ENCODE measurements at regions of chr3 and their contacts with region 1.

Region 1: DNA sequence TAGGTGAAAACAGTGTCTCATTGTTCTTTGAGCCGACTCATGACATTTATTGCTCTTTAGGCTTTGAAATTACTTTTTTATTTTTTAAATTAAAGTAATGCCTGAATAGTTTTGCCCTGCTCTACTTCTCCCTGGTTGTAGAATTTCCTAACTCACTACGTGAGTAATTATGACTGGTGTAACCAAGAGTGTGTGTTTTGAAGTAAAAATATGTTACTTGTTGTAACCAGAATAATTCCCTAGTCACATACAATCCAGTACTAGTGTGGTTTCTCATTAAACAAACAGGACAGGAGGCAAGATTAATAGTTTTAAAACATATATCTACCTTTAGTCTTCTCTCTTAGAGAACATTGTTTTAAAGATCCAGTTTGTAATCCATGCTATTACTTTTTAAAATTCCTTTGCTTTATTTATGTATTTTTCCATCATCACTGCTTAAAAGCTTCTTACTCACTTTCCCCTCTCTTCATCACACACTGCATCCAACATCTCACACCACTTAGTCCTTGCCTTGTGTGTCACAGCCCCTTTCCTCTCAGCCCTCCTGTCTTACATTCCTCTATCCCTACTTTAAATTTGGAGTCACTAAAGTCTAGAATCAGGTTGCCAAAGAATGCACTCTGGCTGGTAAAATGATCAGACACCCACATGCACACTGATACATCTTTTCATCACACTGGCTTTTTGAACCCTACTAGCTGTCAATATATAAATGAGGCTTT is 219.7 kb downstream of the WNT5A start:
- DNase-seq: peak; percentile 76
- ATAC-seq: peak; percentile 60
- H3K4me3 ChIP-seq: no peak overlapping the region
- H3K27ac ChIP-seq: peak overlapping the region; percentile 100
- H3K4me1 ChIP-seq: peaks cover 24% of the 10 kb centered on the region
- H3K27me3 ChIP-seq: no peaks in the 10 kb centered on the region
- CTCF ChIP-seq: no peak
- POLR2A ChIP-seq: no peak
- RAD21 ChIP-seq: no peak

Region 2: DNA sequence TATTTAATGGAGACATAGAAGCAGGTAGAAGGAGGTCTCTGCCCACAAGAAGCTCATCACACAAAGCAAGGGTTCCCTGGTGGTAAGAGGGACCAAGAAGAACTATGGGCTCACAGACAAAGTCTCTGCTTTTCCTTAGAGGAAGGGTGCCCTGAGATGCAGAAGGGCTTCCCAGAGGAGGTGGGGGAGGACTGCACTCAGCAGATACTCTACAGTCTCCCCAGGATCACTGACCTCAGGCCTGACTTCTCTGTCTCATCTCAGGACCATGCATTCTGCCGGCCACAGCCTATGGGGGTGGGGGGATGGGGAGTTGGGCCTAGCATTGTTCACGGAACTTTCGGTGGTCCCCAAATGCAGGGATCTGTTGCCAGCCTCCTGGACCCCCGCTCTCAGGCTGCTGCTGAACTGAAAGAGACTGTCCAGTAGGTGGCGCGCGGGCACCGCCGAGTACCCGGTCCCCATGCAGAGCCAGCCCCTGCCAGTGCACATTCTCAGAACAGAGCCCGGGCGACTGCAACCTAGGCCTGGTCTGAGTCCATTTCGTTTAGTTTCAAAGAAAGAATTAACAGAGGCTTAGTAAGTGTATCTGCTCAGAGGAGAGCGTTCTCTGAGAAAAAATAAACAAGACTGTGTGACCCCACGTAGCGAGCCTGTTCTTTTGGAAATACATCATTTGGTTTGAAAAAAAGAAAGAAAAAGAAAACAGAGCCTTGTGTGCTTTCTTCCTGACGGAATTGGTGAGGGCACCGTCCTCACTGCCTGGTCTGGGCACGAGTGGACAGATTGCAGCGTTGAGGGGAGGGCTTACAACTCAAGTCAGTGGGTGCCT is 413.6 kb before region 1 on chr3:
- CTCF ChIA-PET with region 1: no interaction called
- POLR2A ChIA-PET with region 1: no interaction called
- dilution Hi-C with region 1: no loop called
- in situ Hi-C with region 1: loop called (anchors 25 kb)
- intact Hi-C with region 1: no loop called
- DNase-seq: peak; percentile 74
- ATAC-seq: peak; percentile 98
- H3K4me3 ChIP-seq: no peak overlapping the region
- H3K27ac ChIP-seq: peak overlapping the region; percentile 79
- H3K4me1 ChIP-seq: peaks cover 8% of the 10 kb centered on the region
- H3K27me3 ChIP-seq: peaks cover 5% of the 10 kb centered on the region; the same call in 1 of the 2 replicates
- CTCF ChIP-seq: peak; percentile 83
- POLR2A ChIP-seq: no peak
- RAD21 ChIP-seq: peak; percentile 93

Region 3: GRCh38 chr3:54939557-54940300 is 327.6 kb before region 1 on chr3:
- CTCF ChIA-PET with region 1: no interaction called
- POLR2A ChIA-PET with region 1: no interaction called
- dilution Hi-C with region 1: no loop called
- in situ Hi-C with region 1: no loop called
- intact Hi-C with region 1: no loop called
- DNase-seq: peak; percentile 60
- ATAC-seq: peak; percentile 62
- H3K4me3 ChIP-seq: no peak overlapping the region
- H3K27ac ChIP-seq: no peak overlapping the region
- H3K4me1 ChIP-seq: no peaks in the 10 kb centered on the region
- H3K27me3 ChIP-seq: no peaks in the 10 kb centered on the region; the same call in 1 of the 2 replicates
- CTCF ChIP-seq: no peak
- POLR2A ChIP-seq: no peak
- RAD21 ChIP-seq: no peak

Region 4: GRCh38 chr3:55191911-55192787 is 75.2 kb before region 1 on chr3:
- CTCF ChIA-PET with region 1: no interaction called
- POLR2A ChIA-PET with region 1: no interaction called
- dilution Hi-C with region 1: no loop called
- in situ Hi-C with region 1: no loop called
- intact Hi-C with region 1: loop called (anchors 2 kb)
- DNase-seq: peak; percentile 98
- ATAC-seq: peak; percentile 82
- H3K4me3 ChIP-seq: no peak overlapping the region
- H3K27ac ChIP-seq: peak overlapping the region; percentile 94
- H3K4me1 ChIP-seq: peaks cover 15% of the 10 kb centered on the region
- H3K27me3 ChIP-seq: no peaks in the 10 kb centered on the region
- CTCF ChIP-seq: no peak
- POLR2A ChIP-seq: peak; percentile 52; the same call in 1 of the 2 replicates
- RAD21 ChIP-seq: peak; percentile 45

Region 5: GRCh38 chr3:55885721-55886120 is 618.4 kb after region 1 on chr3:
- CTCF ChIA-PET with region 1: no interaction called
- POLR2A ChIA-PET with region 1: no interaction called
- dilution Hi-C with region 1: no loop called
- in situ Hi-C with region 1: no loop called
- intact Hi-C with region 1: no loop called
- DNase-seq: peak; percentile 82
- ATAC-seq: peak; percentile 69
- H3K4me3 ChIP-seq: no peak overlapping the region
- H3K27ac ChIP-seq: peak overlapping the region; percentile 70; the same call in 1 of the 2 replicates
- H3K4me1 ChIP-seq: peaks cover 9% of the 10 kb centered on the region
- H3K27me3 ChIP-seq: no peaks in the 10 kb centered on the region
- CTCF ChIP-seq: peak; percentile 28; the same call in 1 of the 2 replicates
- POLR2A ChIP-seq: no peak
- RAD21 ChIP-seq: 0 out of 2 replicates have a peak, but pooled peaks have one; percentile 3

Measured in IMR-90 (cell line).